Activated naive CD4-positive, alpha-beta T cell treated with anti-CD3 and anti-CD28 coated beads for 36 hours (primary cell): ENCODE measurements at regions of chr3 and their contacts with region 1.

Region 1: DNA sequence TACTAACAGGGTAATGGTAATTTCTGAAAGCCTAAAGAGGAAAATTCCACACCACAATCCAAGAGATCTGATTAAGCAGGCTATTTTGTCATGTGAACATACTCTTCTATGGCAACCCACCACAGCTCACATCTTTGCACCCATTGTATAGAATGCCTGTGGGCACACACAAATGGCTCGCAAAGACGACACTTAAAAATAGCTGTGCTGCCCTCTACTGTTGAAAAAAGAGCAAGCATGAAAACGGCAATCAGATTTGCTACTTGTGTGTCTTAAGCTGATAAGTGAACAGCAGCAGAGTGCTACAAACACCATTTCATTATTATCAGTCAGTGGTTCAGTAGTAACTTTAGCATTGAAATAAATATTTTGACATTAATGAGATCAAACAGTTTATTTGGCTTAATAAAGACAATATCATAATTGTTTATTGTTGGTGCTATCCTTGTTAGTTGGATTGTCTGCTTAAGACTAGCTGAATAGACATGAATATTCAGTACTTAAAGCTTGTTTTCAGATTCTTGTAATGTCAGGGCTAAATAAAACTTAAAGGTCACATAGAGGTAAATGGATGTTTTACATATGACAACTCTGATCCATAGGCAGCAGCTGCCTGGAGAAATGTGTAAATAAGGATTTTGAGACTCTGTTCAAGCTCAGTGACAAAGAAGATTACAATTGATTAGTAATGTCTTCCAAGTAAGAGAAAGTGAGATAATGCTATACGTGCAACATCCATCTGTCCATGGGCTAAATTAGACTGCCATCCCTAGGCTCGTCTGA is 199.1 kb downstream of the LRRN1 start:
- DNase-seq: peak; percentile 50
- H3K4me3 Mint-ChIP-seq: no peak overlapping the region
- H3K27ac Mint-ChIP-seq: no peak overlapping the region
- H3K4me1 Mint-ChIP-seq: no peaks in the 10 kb centered on the region
- H3K27me3 Mint-ChIP-seq: no peaks in the 10 kb centered on the region

Region 2: GRCh38 chr3:3200632-3201212 is 797.6 kb before region 1 on chr3:
- CTCF ChIA-PET with region 1: interaction called, 32 read pairs
- intact Hi-C with region 1: loop called (anchors 1 kb)
- DNase-seq: peak; percentile 57
- H3K4me3 Mint-ChIP-seq: no peak overlapping the region
- H3K27ac Mint-ChIP-seq: no peak overlapping the region
- H3K4me1 Mint-ChIP-seq: peaks cover 19% of the 10 kb centered on the region
- H3K27me3 Mint-ChIP-seq: no peaks in the 10 kb centered on the region

Region 3: DNA sequence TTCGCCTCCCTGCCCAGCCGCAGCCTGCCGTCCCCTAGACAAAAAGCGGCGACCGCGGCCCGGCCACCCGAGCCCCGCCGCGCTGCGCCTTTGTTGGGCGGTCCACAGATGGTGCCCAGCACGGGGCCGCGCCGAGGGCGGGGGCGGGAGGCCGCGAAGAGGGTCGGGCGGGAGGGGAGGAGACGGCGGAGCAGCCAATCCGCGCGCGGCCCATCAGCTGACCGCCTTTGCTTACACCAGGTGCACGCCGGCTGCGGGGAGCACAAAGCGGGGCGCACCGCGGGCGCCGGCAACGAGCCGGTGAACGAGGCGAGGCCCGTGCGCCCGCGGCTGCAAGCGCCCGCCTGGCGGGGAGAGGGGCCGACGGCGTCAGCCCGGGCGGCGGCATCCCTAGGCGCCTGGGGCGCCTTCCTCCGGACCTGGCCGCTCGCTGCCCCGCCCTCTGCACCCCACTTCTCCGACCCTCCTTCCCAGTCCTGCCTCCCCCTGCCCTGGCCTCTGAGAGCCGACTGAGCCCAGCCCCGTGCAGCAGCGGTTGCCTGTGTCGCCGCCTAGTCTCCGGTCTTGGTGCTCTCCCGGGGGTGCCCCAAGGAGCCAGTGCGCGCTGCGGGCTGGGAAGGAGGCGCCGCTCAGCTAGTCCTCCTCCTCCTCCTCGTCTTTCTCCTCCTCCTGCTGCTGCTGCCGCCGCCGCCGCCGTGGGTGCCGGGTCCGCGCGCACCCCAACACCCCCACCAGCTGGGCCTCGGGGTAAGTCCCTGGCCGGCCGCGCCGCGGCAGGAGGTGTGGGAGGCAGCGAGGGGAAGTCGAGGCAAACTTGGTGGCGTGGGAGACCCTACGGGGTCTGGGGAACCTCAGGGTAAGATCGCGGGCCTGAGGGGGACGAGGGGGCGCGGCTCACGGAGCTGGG is 198.9 kb before region 1 on chr3 and contains the start of gene LRRN1:
- CTCF ChIA-PET with region 1: no interaction called
- intact Hi-C with region 1: loop called (anchors 5 kb)
- DNase-seq: peak; percentile 74
- H3K4me3 Mint-ChIP-seq: peak within 1 kb of the TSS; percentile 82
- H3K27ac Mint-ChIP-seq: no peak within 1 kb of the TSS
- H3K4me1 Mint-ChIP-seq: peaks cover 17% of the 10 kb centered on the region
- H3K27me3 Mint-ChIP-seq: peaks cover 28% of the 10 kb centered on the region
- total RNA-seq, gene LRRN1: 0.49 to 0.67 TPM

Region 4: GRCh38 chr3:4271834-4272233 is 273.5 kb after region 1 on chr3:
- CTCF ChIA-PET with region 1: interaction called, 6 read pairs
- intact Hi-C with region 1: loop called (anchors 2 kb)
- DNase-seq: no peak
- H3K4me3 Mint-ChIP-seq: no peak overlapping the region
- H3K27ac Mint-ChIP-seq: no peak overlapping the region
- H3K4me1 Mint-ChIP-seq: peaks cover 8% of the 10 kb centered on the region
- H3K27me3 Mint-ChIP-seq: no peaks in the 10 kb centered on the region

Region 5: GRCh38 chr3:4290272-4290893 is 292.1 kb after region 1 on chr3:
- CTCF ChIA-PET with region 1: interaction called, 4 read pairs
- intact Hi-C with region 1: loop called (anchors 2 kb)
- DNase-seq: peak; percentile 56
- H3K4me3 Mint-ChIP-seq: no peak overlapping the region
- H3K27ac Mint-ChIP-seq: no peak overlapping the region
- H3K4me1 Mint-ChIP-seq: peaks cover 12% of the 10 kb centered on the region
- H3K27me3 Mint-ChIP-seq: no peaks in the 10 kb centered on the region